ENCODE measurements at regions of chr6 and their contacts with region 1.

Region 1: DNA sequence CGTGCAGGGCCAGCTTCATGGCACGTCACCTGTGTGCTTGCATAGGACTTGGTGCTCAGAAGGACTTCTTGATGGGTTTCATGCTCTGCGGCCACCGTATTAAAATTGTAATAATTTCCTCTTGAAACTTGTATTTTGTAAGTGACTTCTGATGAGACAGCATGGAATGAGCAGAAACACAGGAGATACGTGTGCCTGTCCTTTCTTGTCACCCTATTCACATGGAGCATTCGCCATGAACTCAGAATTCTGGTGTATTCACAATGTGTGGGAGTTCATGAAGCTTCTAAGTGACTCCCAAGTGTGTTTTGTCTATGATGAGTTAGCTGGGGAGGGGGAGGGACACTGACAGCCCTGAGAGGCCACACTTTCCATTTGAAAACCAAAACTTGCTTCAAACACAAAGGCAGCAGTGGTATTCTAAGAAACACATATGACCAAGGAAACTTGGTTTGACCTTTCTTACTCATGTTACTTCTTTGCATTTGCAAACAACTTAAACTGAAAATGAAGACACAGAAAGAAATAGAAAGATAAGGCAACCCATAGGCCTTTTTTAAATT is 92.1 kb upstream of the NEDD9 start:
- DNase-seq: peak; percentile 83
- H3K4me3 Mint-ChIP-seq: peak overlapping the region; percentile 57
- H3K27ac Mint-ChIP-seq: peak overlapping the region; percentile 85
- H3K4me1 Mint-ChIP-seq: peaks cover 73% of the 10 kb centered on the region
- H3K27me3 Mint-ChIP-seq: no peaks in the 10 kb centered on the region

Region 2: GRCh38 chr6:10976571-10976970 is 348.0 kb before region 1 on chr6:
- CTCF ChIA-PET with region 1: no interaction called
- POLR2A ChIA-PET with region 1: no interaction called
- intact Hi-C with region 1: no loop called
- DNase-seq: no peak
- H3K4me3 Mint-ChIP-seq: no peak overlapping the region
- H3K27ac Mint-ChIP-seq: no peak overlapping the region
- H3K4me1 Mint-ChIP-seq: no peaks in the 10 kb centered on the region
- H3K27me3 Mint-ChIP-seq: no peaks in the 10 kb centered on the region

Region 3: DNA sequence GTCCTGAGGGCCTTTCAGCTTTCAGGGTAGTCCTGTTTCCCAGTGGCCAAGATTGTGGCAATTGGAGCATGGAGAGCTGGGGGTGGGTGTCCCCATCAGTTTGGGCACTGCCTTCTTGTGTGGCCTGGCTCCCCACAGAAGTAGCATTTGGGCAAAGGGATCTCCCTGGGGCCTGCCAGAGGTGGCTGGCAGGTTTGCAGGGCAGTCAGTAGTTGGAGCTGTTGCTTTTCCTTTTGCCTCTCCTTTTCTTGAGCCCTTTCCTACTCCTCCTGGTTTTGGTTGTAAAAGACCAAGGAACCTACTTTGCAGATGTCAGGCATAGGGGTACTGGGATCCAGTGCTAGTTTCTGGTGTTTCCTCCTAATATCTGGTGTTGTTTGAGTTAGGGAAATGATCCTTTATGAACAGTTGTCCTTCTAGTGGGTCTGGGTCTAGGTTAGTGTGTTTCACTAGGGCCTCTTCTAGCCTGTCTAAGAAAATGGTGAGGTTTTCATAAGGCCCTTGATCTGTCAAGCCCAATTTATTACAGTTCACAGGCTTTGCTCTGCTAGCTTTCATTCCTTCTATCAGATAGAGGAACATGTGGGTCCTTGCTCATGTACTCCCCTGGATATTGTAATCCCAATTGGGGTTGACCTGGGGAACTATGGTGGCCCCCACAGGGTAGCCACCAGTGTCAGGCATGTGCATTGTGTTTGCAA is 216.0 kb before region 1 on chr6:
- CTCF ChIA-PET with region 1: no interaction called
- POLR2A ChIA-PET with region 1: no interaction called
- intact Hi-C with region 1: no loop called
- DNase-seq: no peak
- H3K4me3 Mint-ChIP-seq: no peak overlapping the region
- H3K27ac Mint-ChIP-seq: no peak overlapping the region
- H3K4me1 Mint-ChIP-seq: peaks cover 25% of the 10 kb centered on the region
- H3K27me3 Mint-ChIP-seq: no peaks in the 10 kb centered on the region

Region 4: GRCh38 chr6:11291582-11291981 is 33.0 kb before region 1 on chr6:
- CTCF ChIA-PET with region 1: no interaction called
- POLR2A ChIA-PET with region 1: no interaction called
- intact Hi-C with region 1: loop called (anchors 1 kb)
- DNase-seq: peak; percentile 50
- H3K4me3 Mint-ChIP-seq: no peak overlapping the region
- H3K27ac Mint-ChIP-seq: peak overlapping the region; percentile 56
- H3K4me1 Mint-ChIP-seq: peaks cover 27% of the 10 kb centered on the region
- H3K27me3 Mint-ChIP-seq: no peaks in the 10 kb centered on the region

Region 5: DNA sequence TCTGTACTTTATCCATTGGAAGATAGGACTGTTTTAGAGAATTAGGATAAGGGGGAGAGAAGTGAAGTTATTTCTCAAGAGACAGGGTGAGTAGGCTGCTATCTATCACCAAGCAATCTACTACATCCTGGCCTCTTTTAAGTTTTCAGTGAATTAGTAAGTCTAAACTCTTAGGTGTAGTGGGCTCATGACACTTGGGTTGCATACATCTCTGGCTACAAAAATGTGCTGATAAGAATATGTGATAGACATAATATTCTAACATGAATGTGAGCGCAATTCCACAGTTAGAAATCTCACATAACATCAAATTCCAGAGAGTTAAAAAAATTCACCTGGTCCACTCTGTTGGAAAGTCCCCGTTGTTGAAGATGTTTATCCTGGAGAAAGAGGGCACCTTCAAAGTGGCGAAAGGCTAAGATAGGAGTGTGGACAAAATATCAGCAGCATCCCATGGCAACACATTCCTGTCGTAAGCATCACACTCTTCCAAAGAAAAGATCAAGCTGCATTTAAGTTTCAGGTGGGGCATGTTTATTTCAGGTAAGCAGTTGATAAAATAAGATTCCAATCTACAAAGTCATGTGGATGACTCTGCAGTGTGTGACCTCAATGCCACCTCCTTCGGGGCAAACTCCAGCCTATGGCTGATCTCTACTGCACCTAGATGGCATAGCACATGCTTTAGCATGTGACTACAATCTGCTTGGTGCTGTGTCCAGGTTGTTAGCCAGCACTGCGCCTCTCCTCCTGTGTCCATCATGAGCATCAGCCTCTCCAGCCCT is 19.6 kb after region 1 on chr6:
- CTCF ChIA-PET with region 1: interaction called, 3 read pairs
- POLR2A ChIA-PET with region 1: interaction called, 10 read pairs
- intact Hi-C with region 1: loop called (anchors 1 kb)
- DNase-seq: no peak
- H3K4me3 Mint-ChIP-seq: no peak overlapping the region
- H3K27ac Mint-ChIP-seq: peak overlapping the region; percentile 61
- H3K4me1 Mint-ChIP-seq: peaks cover 78% of the 10 kb centered on the region
- H3K27me3 Mint-ChIP-seq: no peaks in the 10 kb centered on the region